Posterior cingulate gyrus (tissue), 11 donors: ENCODE measurements at regions of chr2 and their contacts with region 1.

Region 1: GRCh38 chr2:171922230-171923022 is at the start of gene HAT1:
- DNase-seq: peak; percentile 96 to 100 (median 98)

Region 2: GRCh38 chr2:171433763-171434670 is 488.4 kb before region 1 on chr2 and contains the starts of genes DCAF17 and METTL8:
- intact Hi-C with region 1: loop called (anchors 5 kb)
- DNase-seq: peak; percentile 93 to 99 (median 96)

Region 3: DNA sequence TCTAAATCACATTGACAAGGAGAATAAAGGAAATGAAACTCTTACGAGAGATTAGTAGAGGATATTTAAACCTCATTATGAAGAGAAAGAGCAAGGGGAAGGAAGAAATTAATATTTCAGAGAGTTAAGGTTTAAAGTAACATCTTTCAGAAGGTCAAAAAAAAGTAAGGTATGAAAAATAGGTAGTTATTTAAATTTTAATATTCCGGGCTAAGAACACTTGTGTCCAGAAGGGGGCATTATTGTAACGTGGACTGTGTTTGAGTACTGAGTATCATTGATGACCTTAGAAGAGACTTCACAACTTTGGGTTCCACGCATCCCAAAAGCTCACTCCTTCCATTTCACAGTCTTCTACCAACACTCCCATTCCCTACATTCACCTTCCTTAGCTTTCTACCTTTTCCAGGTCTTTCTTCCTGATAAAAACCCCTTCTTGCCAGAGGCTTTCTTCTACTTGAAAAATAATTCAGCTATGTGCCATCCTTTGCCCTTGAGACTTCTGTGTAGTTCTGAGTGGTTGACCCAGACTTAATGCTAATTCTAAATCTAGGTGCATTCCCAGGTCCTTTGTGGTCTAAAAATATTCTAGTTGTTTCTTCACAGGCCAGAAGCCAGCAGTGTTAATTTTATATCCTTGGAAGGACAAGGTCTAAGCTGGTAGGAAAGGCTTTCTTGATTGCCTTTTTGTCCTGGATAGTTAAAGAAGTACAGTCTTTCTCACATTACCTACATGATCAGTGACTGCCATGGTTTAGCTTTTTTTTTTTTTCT is 218.7 kb before region 1 on chr2:
- intact Hi-C with region 1: loop called (anchors 10 kb)
- DNase-seq: no peak

Region 4: GRCh38 chr2:171893824-171894611 is 28.4 kb before region 1 on chr2 and contains the start of gene SLC25A12:
- intact Hi-C with region 1: loop called (anchors 2 kb)
- DNase-seq: peak; percentile 49 to 97 (median 80)

Region 5: GRCh38 chr2:171999604-172000469 is 77.4 kb after region 1 on chr2 and contains the start of gene METAP1D:
- intact Hi-C with region 1: loop called (anchors 2 kb)
- DNase-seq: peak; percentile 83 to 99 (median 93)

Region 6: GRCh38 chr2:172113617-172114016 is 191.2 kb after region 1 on chr2:
- intact Hi-C with region 1: loop called (anchors 10 kb)
- DNase-seq: no peak